CD8-positive, alpha-beta memory T cell (primary cell): ENCODE measurements at regions of chr19 and their contacts with region 1.

Region 1: GRCh38 chr19:17215125-17215971 is at the start of gene USE1:
- DNase-seq: peak; percentile 81 to 92 (median 84)
- H3K4me3 ChIP-seq: peak within 1 kb of the TSS; percentile 62
- H3K4me3 Mint-ChIP-seq: peak within 1 kb of the TSS; percentile 79 to 95 (median 89)
- H3K27ac ChIP-seq: peak within 1 kb of the TSS; percentile 88
- H3K27ac Mint-ChIP-seq: peak within 1 kb of the TSS; percentile 90 to 100 (median 98)
- H3K4me1 ChIP-seq: peaks cover 17% of the 10 kb centered on the region
- H3K4me1 Mint-ChIP-seq: peaks cover 12 to 22% (median 16%) of the 10 kb centered on the region in 3 donors
- H3K27me3 ChIP-seq: no peaks in the 10 kb centered on the region
- H3K27me3 Mint-ChIP-seq: no peaks in the 10 kb centered on the region
- total RNA-seq, gene USE1: 31.9 to 35.4 TPM

Region 2: DNA sequence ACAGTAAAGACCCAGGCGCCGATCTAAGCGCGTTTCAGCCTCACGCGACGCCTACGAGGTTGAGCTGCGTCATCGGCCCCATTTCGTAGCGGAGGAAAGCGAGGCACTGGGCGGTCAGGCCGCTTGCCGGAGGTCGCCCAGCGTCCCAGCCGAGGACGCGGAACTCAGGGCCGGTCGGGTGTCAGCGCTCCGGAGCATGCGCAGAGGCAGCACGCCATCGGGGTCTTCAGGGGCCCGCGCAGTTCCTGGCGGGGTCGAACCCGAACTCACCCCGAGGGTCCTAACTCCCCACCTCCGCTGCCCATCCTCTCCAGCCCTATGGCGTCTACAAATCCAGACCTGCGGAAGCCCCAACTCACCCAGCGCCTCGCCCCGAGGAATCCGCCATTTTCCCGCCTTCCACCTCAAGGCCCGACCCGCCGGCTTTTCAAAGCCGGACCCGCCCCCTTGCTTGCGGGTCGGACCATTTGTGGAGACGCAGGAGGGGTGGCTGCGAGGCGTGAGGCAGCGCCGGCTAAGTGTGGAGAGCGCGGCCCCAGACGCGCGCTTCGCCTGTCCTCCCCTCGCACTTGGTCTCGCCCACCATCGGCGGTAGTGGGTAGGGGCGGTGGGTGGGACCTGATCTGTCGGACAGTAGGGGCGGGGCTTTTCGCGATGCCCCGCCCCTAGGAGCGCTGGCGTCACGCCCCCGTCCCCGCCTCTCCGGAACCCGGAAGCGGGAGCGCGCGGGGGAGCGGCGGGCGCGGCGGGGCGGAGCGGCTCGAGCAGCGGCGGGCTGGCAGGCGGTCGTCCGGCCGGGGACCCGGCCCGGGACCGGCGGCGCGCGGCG is 140.1 kb before region 1 on chr19 and contains the starts of genes HAUS8 and MYO9B:
- CTCF ChIA-PET with region 1: interaction called, 3 read pairs
- POLR2A ChIA-PET with region 1: interaction called, 10 read pairs
- DNase-seq: peak; percentile 100
- H3K4me3 ChIP-seq: peak within 1 kb of the TSS; percentile 86
- H3K4me3 Mint-ChIP-seq: peak within 1 kb of the TSS; percentile 96 to 100 (median 99)
- H3K27ac ChIP-seq: peak within 1 kb of the TSS; percentile 88
- H3K27ac Mint-ChIP-seq: peak within 1 kb of the TSS; percentile 90 to 99 (median 98)
- H3K4me1 ChIP-seq: peaks cover 43% of the 10 kb centered on the region
- H3K4me1 Mint-ChIP-seq: peaks cover 53 to 72% (median 58%) of the 10 kb centered on the region in 3 donors
- H3K27me3 ChIP-seq: no peaks in the 10 kb centered on the region
- H3K27me3 Mint-ChIP-seq: no peaks in the 10 kb centered on the region
- total RNA-seq, gene HAUS8: 33.4 to 36.4 TPM
- total RNA-seq, gene MYO9B: 104 to 108 TPM

Region 3: DNA sequence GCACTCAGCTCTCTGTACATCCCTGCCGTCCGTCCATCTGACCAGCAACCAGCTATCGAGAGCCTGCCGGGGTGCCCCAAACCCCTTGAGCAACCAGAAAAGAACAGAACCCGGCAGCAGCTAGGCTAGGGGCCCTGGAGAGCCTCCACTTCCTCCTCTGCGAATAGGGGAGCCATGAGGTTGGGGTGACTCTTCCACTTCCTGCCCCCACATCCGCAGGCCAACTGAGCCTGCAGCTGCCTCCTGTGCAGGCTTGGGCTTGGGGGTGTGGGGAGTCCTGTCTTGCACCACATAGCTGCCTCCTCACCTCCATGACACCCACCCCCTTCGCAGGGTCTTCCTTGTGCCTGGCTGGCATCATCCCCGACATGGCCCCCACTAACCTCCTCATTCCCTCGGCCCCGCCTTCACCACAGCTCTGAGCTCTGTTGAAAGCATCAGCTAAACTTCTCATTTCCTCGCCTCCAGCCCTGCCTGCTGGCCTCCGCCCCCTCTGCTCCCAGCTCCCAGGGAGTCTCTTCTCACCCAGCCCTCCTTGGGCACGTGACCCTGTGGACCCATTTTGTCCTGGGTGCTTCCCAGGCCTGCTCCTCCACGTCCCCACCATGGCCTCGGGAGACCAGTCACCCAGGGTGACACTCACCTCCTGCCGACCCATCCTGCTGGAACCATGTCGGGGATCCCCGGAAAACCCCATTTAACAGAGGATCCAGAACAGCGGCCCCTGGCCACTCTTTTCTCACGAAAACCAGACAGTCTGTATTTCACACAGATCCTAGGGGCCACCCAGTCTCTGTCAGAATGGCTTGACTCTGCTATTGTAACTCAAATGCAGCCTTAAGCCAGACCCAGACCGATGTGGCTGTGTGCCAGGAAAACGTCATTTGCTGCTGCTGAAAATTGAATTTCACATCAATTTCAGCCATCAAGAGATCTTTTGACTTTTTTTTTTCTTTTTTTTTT is 89.4 kb before region 1 on chr19:
- CTCF ChIA-PET with region 1: interaction called, 5 read pairs
- POLR2A ChIA-PET with region 1: interaction called, 14 read pairs
- DNase-seq: peak; percentile 74 to 92 (median 89)
- H3K4me3 ChIP-seq: peak overlapping the region; percentile 70
- H3K4me3 Mint-ChIP-seq: peak overlapping the region; percentile 79 to 95 (median 87)
- H3K27ac ChIP-seq: peak overlapping the region; percentile 86
- H3K27ac Mint-ChIP-seq: peak overlapping the region; percentile 95 to 100 (median 99)
- H3K4me1 ChIP-seq: peaks cover 41% of the 10 kb centered on the region
- H3K4me1 Mint-ChIP-seq: peaks cover 42 to 79% (median 63%) of the 10 kb centered on the region in 3 donors
- H3K27me3 ChIP-seq: no peaks in the 10 kb centered on the region
- H3K27me3 Mint-ChIP-seq: no peaks in the 10 kb centered on the region

Region 4: DNA sequence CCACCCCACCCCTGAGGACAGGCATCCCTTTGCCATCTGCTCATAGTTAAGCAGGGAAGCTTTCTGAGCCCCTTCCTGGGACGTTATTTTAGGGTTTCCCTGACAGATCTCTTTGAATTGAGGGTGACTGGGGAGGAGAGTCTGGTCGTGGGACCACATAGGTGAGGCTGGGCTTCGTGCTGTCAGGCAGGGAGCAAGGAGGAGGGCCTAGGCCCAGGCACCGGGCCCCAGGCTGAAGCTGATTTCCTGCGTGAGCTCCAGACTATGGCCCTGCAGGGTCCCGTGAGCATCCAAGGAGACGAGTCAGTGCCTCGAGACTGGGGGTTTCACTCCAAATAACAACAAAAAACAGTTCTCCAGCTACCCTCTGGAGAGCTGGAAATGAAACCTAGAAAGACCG is 79.3 kb before region 1 on chr19:
- CTCF ChIA-PET with region 1: no interaction called
- POLR2A ChIA-PET with region 1: no interaction called
- DNase-seq: no peak
- H3K4me3 ChIP-seq: no peak overlapping the region
- H3K4me3 Mint-ChIP-seq: no peak overlapping the region
- H3K27ac ChIP-seq: no peak overlapping the region
- H3K27ac Mint-ChIP-seq: peak overlapping the region in 1 of 8 donors; percentile 29
- H3K4me1 ChIP-seq: peaks cover 10% of the 10 kb centered on the region
- H3K4me1 Mint-ChIP-seq: peaks cover 9 to 32% (median 12%) of the 10 kb centered on the region in 3 donors
- H3K27me3 ChIP-seq: no peaks in the 10 kb centered on the region
- H3K27me3 Mint-ChIP-seq: no peaks in the 10 kb centered on the region

Region 5: DNA sequence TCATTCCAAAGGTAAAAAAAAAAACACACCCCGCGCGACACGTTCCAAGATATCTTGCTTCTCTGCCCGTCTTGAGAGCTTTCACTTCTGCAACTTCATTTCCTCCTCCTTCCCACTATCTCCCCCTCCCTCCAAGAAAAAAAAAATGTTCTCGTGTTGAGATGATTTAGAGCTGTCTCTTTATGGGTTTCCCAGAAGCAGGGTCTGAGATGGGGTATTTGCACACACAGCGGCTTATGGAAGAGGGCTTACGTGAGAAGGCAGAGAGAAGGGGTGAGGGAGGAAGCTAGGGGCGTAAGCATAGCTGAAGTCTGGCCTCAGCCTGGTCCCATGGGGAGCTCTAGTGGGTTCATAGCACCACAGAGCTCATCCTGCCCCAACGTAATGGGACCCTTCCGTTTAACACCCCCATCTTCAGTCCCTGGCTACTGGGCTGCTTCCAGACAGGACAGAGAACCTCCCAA is 31.5 kb before region 1 on chr19:
- CTCF ChIA-PET with region 1: interaction called, 7 read pairs
- POLR2A ChIA-PET with region 1: interaction called, 14 read pairs
- DNase-seq: peak in 2 of 5 donors; percentile 22 to 33
- H3K4me3 ChIP-seq: peak overlapping the region; percentile 70
- H3K4me3 Mint-ChIP-seq: peak overlapping the region; percentile 78 to 91 (median 90)
- H3K27ac ChIP-seq: peak overlapping the region; percentile 58
- H3K27ac Mint-ChIP-seq: peak overlapping the region; percentile 84 to 99 (median 96)
- H3K4me1 ChIP-seq: peaks cover 21% of the 10 kb centered on the region
- H3K4me1 Mint-ChIP-seq: peaks cover 21 to 30% (median 25%) of the 10 kb centered on the region in 3 donors
- H3K27me3 ChIP-seq: no peaks in the 10 kb centered on the region
- H3K27me3 Mint-ChIP-seq: no peaks in the 10 kb centered on the region

Region 6: GRCh38 chr19:17226002-17226933 is 10.9 kb after region 1 on chr19 and contains the start of gene OCEL1:
- CTCF ChIA-PET with region 1: interaction called, 18 read pairs
- POLR2A ChIA-PET with region 1: interaction called, 39 read pairs
- DNase-seq: peak; percentile 94 to 98 (median 96)
- H3K4me3 ChIP-seq: peak within 1 kb of the TSS; percentile 96
- H3K4me3 Mint-ChIP-seq: peak within 1 kb of the TSS; percentile 88 to 95 (median 94)
- H3K27ac ChIP-seq: peak within 1 kb of the TSS; percentile 92
- H3K27ac Mint-ChIP-seq: peak within 1 kb of the TSS; percentile 68 to 98 (median 97)
- H3K4me1 ChIP-seq: peaks cover 4% of the 10 kb centered on the region
- H3K4me1 Mint-ChIP-seq: peaks cover 5 to 21% (median 6%) of the 10 kb centered on the region in 3 donors
- H3K27me3 ChIP-seq: no peaks in the 10 kb centered on the region
- H3K27me3 Mint-ChIP-seq: no peaks in the 10 kb centered on the region
- total RNA-seq, gene OCEL1: 15.0 to 16.8 TPM

Region 7: DNA sequence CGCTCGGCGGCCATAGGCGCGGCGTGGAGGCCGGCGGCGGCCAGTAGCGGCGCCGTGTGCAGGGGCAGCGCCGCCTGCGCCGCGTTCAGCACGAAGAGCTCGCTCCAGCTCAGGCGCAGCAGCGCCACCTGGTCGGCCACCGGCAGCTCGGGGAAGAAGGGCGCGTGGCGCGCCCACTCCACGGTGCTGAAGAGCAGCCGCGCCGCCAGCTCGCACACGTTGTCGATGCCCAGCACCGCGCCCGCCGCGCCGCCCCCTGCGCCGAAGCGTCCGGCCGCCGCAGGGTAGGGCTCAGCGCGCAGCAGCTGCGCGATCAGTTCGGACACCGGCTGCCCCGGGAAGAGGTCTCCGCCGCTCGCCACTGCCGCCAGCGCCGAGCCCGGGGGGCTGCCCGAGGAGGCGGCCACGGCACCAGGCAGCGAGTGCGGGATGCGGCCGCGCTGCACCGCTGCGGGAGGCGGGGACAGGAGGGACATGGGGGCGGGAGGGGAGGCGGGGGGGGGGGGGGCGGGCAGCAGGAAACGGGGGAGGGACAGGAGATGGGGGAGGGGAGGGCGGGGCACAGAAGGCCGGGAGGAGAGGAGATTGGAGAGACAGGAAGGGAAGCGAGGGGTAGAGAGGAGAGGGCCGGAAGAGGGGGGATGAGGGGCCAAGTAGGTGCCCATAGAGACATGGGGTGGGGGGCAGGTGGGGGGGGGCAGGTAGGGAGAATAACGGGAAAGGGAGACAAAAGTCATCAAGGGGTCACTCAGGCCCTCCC is 20.4 kb after region 1 on chr19:
- CTCF ChIA-PET with region 1: interaction called, 10 read pairs
- POLR2A ChIA-PET with region 1: interaction called, 11 read pairs
- DNase-seq: peak; percentile 65 to 84 (median 71)
- H3K4me3 ChIP-seq: peak overlapping the region; percentile 78
- H3K4me3 Mint-ChIP-seq: peak overlapping the region; percentile 63 to 82 (median 73)
- H3K27ac ChIP-seq: peak overlapping the region; percentile 64
- H3K27ac Mint-ChIP-seq: no peak overlapping the region
- H3K4me1 ChIP-seq: peaks cover 15% of the 10 kb centered on the region
- H3K4me1 Mint-ChIP-seq: peaks cover 4 to 7% (median 5%) of the 10 kb centered on the region in 3 donors
- H3K27me3 ChIP-seq: no peaks in the 10 kb centered on the region
- H3K27me3 Mint-ChIP-seq: peaks cover 0 to 3% of the 10 kb centered on the region in 2 donors